ENCODE measurements at regions of chr13 and their contacts with region 1.

Region 1: GRCh38 chr13:40401911-40402776 is 264.3 kb downstream of the FOXO1 start:
- H3K4me3 Mint-ChIP-seq: no peak overlapping the region
- H3K27ac Mint-ChIP-seq: peak overlapping the region; percentile 21
- H3K4me1 Mint-ChIP-seq: peaks cover 72% of the 10 kb centered on the region
- H3K27me3 Mint-ChIP-seq: no peaks in the 10 kb centered on the region

Region 2: GRCh38 chr13:40137400-40137799 is 264.7 kb before region 1 on chr13:
- intact Hi-C with region 1: no loop called
- H3K4me3 Mint-ChIP-seq: no peak overlapping the region
- H3K27ac Mint-ChIP-seq: no peak overlapping the region
- H3K4me1 Mint-ChIP-seq: no peaks in the 10 kb centered on the region
- H3K27me3 Mint-ChIP-seq: peaks cover 6% of the 10 kb centered on the region

Region 3: GRCh38 chr13:40440990-40441820 is 39.1 kb after region 1 on chr13:
- intact Hi-C with region 1: loop called (anchors 5 kb)
- H3K4me3 Mint-ChIP-seq: no peak overlapping the region
- H3K27ac Mint-ChIP-seq: no peak overlapping the region
- H3K4me1 Mint-ChIP-seq: peaks cover 35% of the 10 kb centered on the region
- H3K27me3 Mint-ChIP-seq: no peaks in the 10 kb centered on the region

Region 4: DNA sequence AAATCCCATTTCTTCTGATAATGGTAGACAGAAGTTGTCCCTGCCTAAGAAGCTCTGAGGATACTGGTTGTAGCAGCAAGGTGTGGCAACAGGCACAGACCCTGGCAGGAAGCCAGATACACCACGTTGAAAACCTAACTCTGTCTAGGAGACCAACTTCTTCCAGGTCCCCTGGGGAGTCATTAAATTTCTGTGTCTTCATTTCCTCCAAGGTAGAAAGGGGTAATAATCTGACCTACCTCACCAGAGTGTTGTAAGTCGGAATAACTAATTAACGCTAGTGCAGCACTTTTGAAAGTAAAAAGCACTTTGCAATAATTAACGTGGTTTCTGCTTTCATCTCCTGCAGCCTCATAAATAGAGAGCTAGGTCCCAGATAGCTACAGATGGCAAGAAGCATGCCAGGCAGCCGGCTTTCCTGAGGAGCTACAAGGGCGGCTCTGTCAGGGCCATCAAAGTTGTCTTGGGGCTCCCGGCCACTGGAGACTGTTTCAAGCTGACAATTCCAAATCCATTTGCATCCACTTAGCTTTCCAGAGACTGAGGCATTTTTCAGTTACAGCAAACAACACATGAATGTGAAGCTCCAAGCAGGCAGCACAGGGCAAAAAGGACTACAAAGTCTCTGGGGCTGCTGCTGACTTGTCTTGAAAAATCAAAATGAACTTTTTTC is 88.1 kb after region 1 on chr13:
- intact Hi-C with region 1: no loop called
- H3K4me3 Mint-ChIP-seq: no peak overlapping the region
- H3K27ac Mint-ChIP-seq: no peak overlapping the region
- H3K4me1 Mint-ChIP-seq: peaks cover 11% of the 10 kb centered on the region
- H3K27me3 Mint-ChIP-seq: peaks cover 20% of the 10 kb centered on the region

Region 5: DNA sequence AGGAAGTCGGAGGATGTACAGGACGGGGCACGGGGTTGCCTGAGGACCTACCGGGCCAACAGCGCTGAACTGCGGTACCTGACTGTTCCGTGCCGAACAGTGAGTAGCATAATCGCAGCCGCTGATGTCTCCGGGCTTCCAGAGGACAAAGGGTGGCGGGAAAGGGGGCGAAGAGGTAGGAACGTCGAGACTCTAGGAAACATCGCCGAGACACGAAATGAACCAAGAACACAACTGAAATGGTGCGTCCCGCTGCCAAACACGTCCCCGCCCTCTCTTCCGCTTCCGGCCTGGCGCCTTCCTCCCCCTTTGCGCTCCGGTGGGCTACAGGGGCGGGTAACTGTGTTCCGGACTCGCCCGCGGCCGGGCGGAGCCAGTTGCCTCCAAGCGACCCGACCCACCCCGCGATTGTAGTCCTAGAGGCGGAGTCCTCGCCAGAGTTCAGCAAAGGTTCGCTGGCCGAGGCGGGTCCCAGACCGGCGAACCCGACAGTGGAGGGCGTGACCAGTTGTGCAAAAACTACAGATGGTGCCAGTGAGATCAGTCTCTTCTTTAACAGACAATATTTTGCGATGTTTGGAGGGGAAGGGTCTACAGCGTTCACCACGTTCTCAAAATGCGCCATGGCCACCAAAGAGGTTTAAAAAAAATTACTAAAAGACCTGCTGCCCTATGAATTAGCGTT is 368.9 kb after region 1 on chr13 and contains the start of gene MRPS31:
- intact Hi-C with region 1: loop called (anchors 10 kb)
- H3K4me3 Mint-ChIP-seq: peak within 1 kb of the TSS; percentile 95
- H3K27ac Mint-ChIP-seq: peak within 1 kb of the TSS; percentile 95
- H3K4me1 Mint-ChIP-seq: peaks cover 13% of the 10 kb centered on the region
- H3K27me3 Mint-ChIP-seq: no peaks in the 10 kb centered on the region

Region 6: DNA sequence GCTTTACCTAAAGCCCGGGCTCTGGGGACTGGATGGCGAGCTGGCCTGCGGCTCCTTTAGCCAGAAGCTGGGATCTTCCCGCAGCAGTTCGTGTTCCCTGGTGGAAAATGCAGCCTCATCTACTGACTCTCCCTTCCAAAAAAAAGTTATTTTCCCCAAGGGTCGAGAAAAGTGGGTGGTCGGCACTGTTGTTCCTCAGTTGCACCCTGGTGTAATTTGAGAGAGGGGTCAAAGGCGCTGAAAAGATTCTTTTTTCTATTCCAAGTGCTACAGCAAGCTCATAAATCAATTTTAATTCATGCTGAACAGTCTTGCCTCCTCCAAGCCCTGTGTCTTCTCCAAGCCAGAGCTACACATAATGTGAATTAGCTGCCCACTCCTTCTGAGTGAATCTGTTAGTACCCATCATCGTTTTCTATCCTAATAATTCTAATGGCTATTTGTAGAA is 388.0 kb after region 1 on chr13:
- intact Hi-C with region 1: no loop called
- H3K4me3 Mint-ChIP-seq: peak overlapping the region; percentile 72
- H3K27ac Mint-ChIP-seq: peak overlapping the region; percentile 50
- H3K4me1 Mint-ChIP-seq: peaks cover 10% of the 10 kb centered on the region
- H3K27me3 Mint-ChIP-seq: no peaks in the 10 kb centered on the region

Measured in dendritic cell treated with granulocyte-macrophage colony-stimulating factor and Interleukin-4, amounts not matched to agents 40 ng/mL and 50 ng/mL, for 4 days (primary cell).